Cardiac septum (tissue), 1 donor: ENCODE measurements at regions of chr2 and their contacts with region 1.

Region 1: DNA sequence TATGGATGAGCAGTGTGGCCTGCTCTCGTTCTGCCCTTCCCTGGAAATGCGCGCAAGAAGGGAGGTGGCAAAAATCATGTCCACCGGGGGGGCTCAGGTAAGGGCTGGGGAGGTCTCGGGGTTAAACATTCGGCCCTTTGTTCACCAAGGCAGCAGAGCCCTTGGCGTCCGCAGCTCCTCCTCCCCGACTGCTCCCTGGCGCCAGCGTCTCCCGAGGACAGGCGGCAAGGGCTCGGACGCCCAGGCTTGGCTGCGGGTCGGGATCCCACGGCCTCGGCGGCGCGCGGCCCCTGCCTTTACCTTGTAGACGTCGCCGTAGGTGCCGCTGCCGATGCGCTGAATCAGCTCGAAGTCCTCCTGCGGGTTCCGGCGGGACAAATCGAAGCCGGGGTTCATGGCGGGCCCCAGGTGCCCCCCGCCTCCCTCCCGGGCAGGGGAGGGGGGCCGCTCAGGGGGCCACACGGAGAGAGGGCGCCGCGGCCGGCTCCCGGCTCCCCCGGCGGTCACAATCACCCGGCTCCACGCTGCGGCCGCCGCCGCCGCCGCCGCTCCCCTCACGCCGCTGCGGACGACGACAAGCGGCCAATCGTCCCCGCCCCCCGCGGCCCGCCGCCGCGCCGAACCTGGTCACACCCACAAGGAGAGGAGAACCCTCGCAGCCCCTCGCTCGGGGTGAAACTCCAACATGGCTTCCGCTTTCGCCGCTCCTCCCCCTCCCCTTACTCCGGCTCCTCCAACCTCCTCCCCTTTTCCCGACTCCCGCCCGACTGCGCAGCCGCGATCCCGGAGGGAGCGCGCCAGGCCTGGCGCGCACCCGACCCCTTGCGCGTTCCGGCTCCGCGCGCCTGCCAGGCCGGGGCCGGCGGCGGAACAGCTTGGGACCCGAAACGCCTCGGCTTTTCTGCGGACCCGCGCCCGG is at the start of gene MAP4K3:
- DNase-seq: peak; percentile 95
- total RNA-seq, gene MAP4K3: 40.0 TPM

Region 2: GRCh38 chr2:39194686-39195085 is 242.2 kb before region 1 on chr2:
- intact Hi-C with region 1: no loop called
- DNase-seq: no peak

Region 3: GRCh38 chr2:39379643-39380524 is 57.0 kb before region 1 on chr2:
- intact Hi-C with region 1: loop called (anchors 2 kb)
- DNase-seq: no peak

Region 4: GRCh38 chr2:39469807-39470206 is 33.0 kb after region 1 on chr2:
- intact Hi-C with region 1: loop called (anchors 5 kb)
- DNase-seq: no peak

Region 5: GRCh38 chr2:39504790-39505335 is 68.0 kb after region 1 on chr2:
- intact Hi-C with region 1: loop called (anchors 2 kb)
- DNase-seq: no peak

Region 6: GRCh38 chr2:39696838-39697237 is 260.0 kb after region 1 on chr2:
- intact Hi-C with region 1: loop called (anchors 5 kb)
- DNase-seq: no peak